AG04449 (cell line): ENCODE measurements at regions of chr10 and their contacts with region 1.

Region 1: GRCh38 chr10:44932517-44933450 is 21.6 kb downstream of the TMEM72 start:
- DNase-seq: peak; percentile 12
- H3K4me3 ChIP-seq: no peak overlapping the region
- CTCF ChIP-seq: peak; percentile 100

Region 2: GRCh38 chr10:44952779-44953231 is 20.0 kb after region 1 on chr10:
- CTCF ChIA-PET with region 1: interaction called, 77 read pairs
- POLR2A ChIA-PET with region 1: no interaction called
- DNase-seq: no peak
- H3K4me3 ChIP-seq: no peak overlapping the region
- CTCF ChIP-seq: no peak

Region 3: GRCh38 chr10:44974628-44975431 is 42.0 kb after region 1 on chr10:
- CTCF ChIA-PET with region 1: interaction called, 20 read pairs
- POLR2A ChIA-PET with region 1: interaction called, 9 read pairs
- DNase-seq: no peak
- H3K4me3 ChIP-seq: peak overlapping the region; percentile 50
- CTCF ChIP-seq: peak; percentile 85

Region 4: GRCh38 chr10:44990302-44990655 is 57.5 kb after region 1 on chr10:
- CTCF ChIA-PET with region 1: interaction called, 56 read pairs
- POLR2A ChIA-PET with region 1: no interaction called
- DNase-seq: no peak
- H3K4me3 ChIP-seq: no peak overlapping the region
- CTCF ChIP-seq: peak; percentile 21